Activated B cell treated with CpG ODN at 0.5 μM for 24 hours (primary cell): ENCODE measurements at regions of chr5 and their contacts with region 1.

Region 1: GRCh38 chr5:139787568-139788293 is 7.9 kb upstream of the PSD2 start:
- DNase-seq: peak; percentile 92
- ATAC-seq: peak; percentile 93
- H3K4me3 Mint-ChIP-seq: peak overlapping the region; percentile 88
- H3K27ac Mint-ChIP-seq: no peak overlapping the region
- H3K4me1 Mint-ChIP-seq: peaks cover 11% of the 10 kb centered on the region
- H3K27me3 Mint-ChIP-seq: peaks cover 19% of the 10 kb centered on the region
- CTCF ChIP-seq: no peak

Region 2: GRCh38 chr5:139774980-139775661 is 12.6 kb before region 1 on chr5:
- CTCF ChIA-PET with region 1: interaction called, 32 read pairs
- POLR2A ChIA-PET with region 1: interaction called, 3 read pairs
- intact Hi-C with region 1: loop called (anchors 1 kb)
- DNase-seq: peak; percentile 83
- ATAC-seq: peak; percentile 96
- H3K4me3 Mint-ChIP-seq: peak overlapping the region; percentile 59
- H3K27ac Mint-ChIP-seq: peak overlapping the region; percentile 46
- H3K4me1 Mint-ChIP-seq: peaks cover 12% of the 10 kb centered on the region
- H3K27me3 Mint-ChIP-seq: peaks cover 3% of the 10 kb centered on the region
- CTCF ChIP-seq: peak; percentile 84

Region 3: DNA sequence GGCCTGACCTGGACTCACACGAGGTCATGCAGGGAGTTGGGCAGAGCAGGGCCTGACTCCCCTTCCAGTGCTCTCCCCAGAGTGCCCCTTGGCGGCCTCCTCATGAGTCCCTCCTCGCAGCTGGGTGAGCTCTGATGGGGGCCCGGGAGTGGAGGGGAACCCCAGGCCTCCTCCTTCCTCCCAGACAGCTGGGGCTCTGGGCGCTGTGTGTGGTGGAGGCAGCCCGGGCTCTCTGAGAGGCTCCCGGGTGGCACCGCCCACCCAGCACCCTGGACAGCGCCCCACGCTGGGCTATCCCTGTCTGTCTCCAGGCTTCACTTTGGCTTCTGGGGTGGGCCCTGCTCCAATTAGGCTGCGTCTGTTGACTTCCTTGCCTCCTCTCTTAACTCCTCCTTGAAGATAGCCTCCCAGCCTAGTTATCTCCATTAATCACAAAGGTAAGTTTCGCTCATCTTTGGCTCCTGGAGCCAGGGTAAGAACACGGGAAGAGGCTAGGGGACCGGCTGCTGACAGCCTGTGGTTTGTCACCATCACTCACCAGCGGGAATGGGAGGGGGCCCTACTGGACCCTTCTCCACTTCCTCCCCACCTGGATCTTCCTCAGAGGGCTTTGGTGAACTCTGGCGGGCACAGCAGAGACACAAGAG is 20.9 kb after region 1 on chr5:
- CTCF ChIA-PET with region 1: no interaction called
- POLR2A ChIA-PET with region 1: no interaction called
- intact Hi-C with region 1: no loop called
- DNase-seq: no peak
- ATAC-seq: peak; percentile 58
- H3K4me3 Mint-ChIP-seq: no peak overlapping the region
- H3K27ac Mint-ChIP-seq: no peak overlapping the region
- H3K4me1 Mint-ChIP-seq: no peaks in the 10 kb centered on the region
- H3K27me3 Mint-ChIP-seq: peaks cover 36% of the 10 kb centered on the region
- CTCF ChIP-seq: no peak

Region 4: DNA sequence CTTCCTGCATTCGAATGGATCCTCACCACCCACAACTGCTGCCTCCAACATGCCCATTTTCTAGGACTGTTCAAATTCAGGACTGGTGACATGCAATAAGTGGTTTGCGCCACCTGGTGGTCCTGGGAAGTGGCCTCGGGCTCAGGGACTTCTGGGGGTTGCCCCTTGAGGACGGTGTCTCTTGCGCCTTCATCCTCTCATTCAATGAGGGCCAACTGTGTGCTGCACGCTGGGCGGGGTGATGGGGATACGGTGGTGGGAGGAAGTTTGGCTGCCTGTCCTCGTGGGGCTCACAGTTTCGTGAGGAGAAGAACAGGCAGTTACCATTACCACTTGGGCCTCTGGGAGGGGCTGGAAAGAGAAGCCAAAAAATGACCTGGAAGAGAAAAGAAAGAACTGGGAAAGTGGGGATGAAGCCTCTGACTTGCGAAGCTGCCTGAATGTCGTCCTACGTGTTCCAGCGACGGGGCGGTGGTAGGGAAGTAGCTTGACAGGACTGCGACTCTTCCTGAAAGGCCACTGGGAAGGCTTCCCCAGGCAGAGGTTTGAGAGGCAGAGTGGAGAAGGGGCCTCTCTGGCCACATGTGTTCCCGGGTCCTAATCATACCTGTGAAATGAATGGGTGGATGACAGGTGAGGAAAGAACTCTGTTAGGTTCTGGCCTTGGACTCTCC is 56.9 kb after region 1 on chr5:
- CTCF ChIA-PET with region 1: interaction called, 37 read pairs
- POLR2A ChIA-PET with region 1: interaction called, 3 read pairs
- intact Hi-C with region 1: loop called (anchors 1 kb)
- DNase-seq: peak; percentile 57
- ATAC-seq: peak; percentile 40
- H3K4me3 Mint-ChIP-seq: peak overlapping the region; percentile 5
- H3K27ac Mint-ChIP-seq: no peak overlapping the region
- H3K4me1 Mint-ChIP-seq: peaks cover 16% of the 10 kb centered on the region
- H3K27me3 Mint-ChIP-seq: peaks cover 13% of the 10 kb centered on the region
- CTCF ChIP-seq: peak; percentile 61

Region 5: GRCh38 chr5:139863855-139864558 is 76.3 kb after region 1 on chr5:
- CTCF ChIA-PET with region 1: interaction called, 19 read pairs
- POLR2A ChIA-PET with region 1: interaction called, 8 read pairs
- intact Hi-C with region 1: loop called (anchors 1 kb)
- DNase-seq: peak; percentile 45
- ATAC-seq: peak; percentile 90
- H3K4me3 Mint-ChIP-seq: no peak overlapping the region
- H3K27ac Mint-ChIP-seq: no peak overlapping the region
- H3K4me1 Mint-ChIP-seq: peaks cover 5% of the 10 kb centered on the region
- H3K27me3 Mint-ChIP-seq: peaks cover 20% of the 10 kb centered on the region
- CTCF ChIP-seq: peak; percentile 64